IMR-90 (cell line): ENCODE measurements at regions of chr1 and their contacts with region 1.

Region 1: GRCh38 chr1:8817406-8818324 is at the start of gene RERE:
- DNase-seq: peak; percentile 91
- ATAC-seq: peak; percentile 91
- H3K4me3 ChIP-seq: peak within 1 kb of the TSS; percentile 82
- H3K27ac ChIP-seq: peak within 1 kb of the TSS; percentile 92
- H3K4me1 ChIP-seq: peaks cover 7% of the 10 kb centered on the region
- H3K27me3 ChIP-seq: no peaks in the 10 kb centered on the region
- CTCF ChIP-seq: peak; percentile 15; the same call in 1 of the 2 replicates
- POLR2A ChIP-seq: peak; percentile 93
- RAD21 ChIP-seq: no peak
- total RNA-seq, gene RERE: 11.5 and 15.8 TPM in 2 replicates

Region 2: DNA sequence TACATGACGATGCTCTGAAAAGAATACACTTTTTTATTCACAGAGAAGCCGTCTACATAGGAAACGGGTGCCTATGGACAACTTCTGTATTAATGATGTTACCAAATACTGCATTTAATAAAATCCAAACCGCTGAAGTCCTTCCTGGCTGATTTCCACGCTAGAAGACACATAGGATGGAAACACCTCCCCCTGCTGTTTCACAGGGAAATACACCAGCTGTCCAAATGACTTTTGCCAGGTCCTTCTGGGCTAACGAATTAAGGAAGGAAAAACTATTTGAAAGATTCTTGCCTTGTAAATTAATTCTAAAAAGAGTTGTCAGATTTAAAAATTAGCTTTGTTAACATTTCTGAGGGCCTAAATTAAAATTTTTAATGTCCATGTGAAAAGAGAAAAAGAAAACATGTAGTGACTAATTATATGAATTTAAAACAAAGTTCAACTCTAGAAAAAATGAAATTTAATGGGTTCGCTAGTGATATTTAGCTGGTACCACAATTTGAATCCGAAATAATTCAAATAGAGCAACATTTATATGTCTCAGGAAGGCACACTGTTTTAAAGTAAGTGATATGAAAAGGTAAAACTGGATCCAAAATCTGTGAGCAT is 146.3 kb before region 1 on chr1:
- CTCF ChIA-PET with region 1: no interaction called
- POLR2A ChIA-PET with region 1: no interaction called
- dilution Hi-C with region 1: no loop called
- in situ Hi-C with region 1: no loop called
- intact Hi-C with region 1: no loop called
- DNase-seq: peak; percentile 84
- ATAC-seq: peak; percentile 38; the same call in 1 of the 2 replicates
- H3K4me3 ChIP-seq: no peak overlapping the region
- H3K27ac ChIP-seq: no peak overlapping the region
- H3K4me1 ChIP-seq: peaks cover 21% of the 10 kb centered on the region
- H3K27me3 ChIP-seq: no peaks in the 10 kb centered on the region
- CTCF ChIP-seq: peak; percentile 90
- POLR2A ChIP-seq: no peak
- RAD21 ChIP-seq: peak; percentile 85

Region 3: DNA sequence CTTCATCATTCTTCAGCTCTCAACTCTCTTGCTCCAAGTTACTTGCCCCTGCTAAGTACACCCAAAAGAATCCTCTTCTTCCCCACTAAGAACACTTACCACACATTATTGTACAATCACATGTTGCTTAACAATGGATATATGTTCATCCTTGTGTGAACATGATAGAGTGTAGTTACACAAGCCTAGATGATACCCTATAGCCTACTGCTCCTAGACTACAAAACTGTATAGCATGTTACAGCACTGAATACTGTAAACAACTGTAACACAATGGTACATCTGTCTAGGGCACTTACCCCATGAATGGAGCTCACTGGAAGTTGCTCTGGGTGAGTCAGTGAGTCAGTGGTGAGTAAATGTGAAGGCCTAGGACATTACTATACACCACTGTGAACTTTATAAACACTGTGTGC is 77.6 kb before region 1 on chr1:
- CTCF ChIA-PET with region 1: no interaction called
- POLR2A ChIA-PET with region 1: no interaction called
- dilution Hi-C with region 1: no loop called
- in situ Hi-C with region 1: no loop called
- intact Hi-C with region 1: loop called (anchors 5 kb)
- DNase-seq: peak; percentile 98
- ATAC-seq: peak; percentile 99
- H3K4me3 ChIP-seq: no peak overlapping the region
- H3K27ac ChIP-seq: peak overlapping the region; percentile 83
- H3K4me1 ChIP-seq: peaks cover 13% of the 10 kb centered on the region
- H3K27me3 ChIP-seq: no peaks in the 10 kb centered on the region
- CTCF ChIP-seq: no peak
- POLR2A ChIP-seq: no peak
- RAD21 ChIP-seq: no peak

Region 4: DNA sequence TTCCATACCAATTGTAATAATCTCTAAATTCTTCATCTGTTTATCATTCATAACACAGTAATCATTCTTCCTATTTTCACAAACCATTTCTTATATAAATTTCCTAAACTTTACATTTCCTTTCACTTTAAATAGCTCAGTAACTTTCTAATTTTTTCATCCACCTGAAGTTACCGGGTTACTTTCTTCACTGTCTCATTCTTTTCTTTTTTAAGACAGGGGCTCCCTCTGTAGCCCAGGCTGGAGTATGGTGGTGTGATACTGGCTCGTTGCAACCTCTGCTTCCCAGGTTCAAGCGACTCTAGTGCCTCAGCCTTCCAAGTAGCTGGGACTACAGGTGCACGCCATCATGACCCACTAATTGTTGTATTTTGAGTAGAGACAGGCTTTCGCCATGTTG is 41.6 kb before region 1 on chr1:
- CTCF ChIA-PET with region 1: no interaction called
- POLR2A ChIA-PET with region 1: no interaction called
- dilution Hi-C with region 1: no loop called
- in situ Hi-C with region 1: no loop called
- intact Hi-C with region 1: loop called (anchors 5 kb)
- DNase-seq: no peak
- ATAC-seq: no peak
- H3K4me3 ChIP-seq: no peak overlapping the region
- H3K27ac ChIP-seq: no peak overlapping the region
- H3K4me1 ChIP-seq: no peaks in the 10 kb centered on the region
- H3K27me3 ChIP-seq: no peaks in the 10 kb centered on the region
- CTCF ChIP-seq: no peak
- POLR2A ChIP-seq: no peak
- RAD21 ChIP-seq: no peak